Naive thymus-derived CD4-positive, alpha-beta T cell (primary cell): ENCODE measurements at regions of chr1 and their contacts with region 1.

Region 1: GRCh38 chr1:241627453-241628259 is 12.5 kb downstream of the CHML start:
- DNase-seq: peak in 7 of 9 donors; percentile 59 to 81 (median 72)
- ATAC-seq: peak; percentile 90
- H3K4me3 ChIP-seq: peak overlapping the region; percentile 37
- H3K4me3 Mint-ChIP-seq: peak overlapping the region; percentile 55 to 87 (median 84)
- H3K27ac ChIP-seq: peak overlapping the region; percentile 70
- H3K27ac Mint-ChIP-seq: peak overlapping the region; percentile 87 to 96 (median 92)
- H3K4me1 ChIP-seq: peaks cover 0 to 9% of the 10 kb centered on the region in 2 donors
- H3K4me1 Mint-ChIP-seq: peaks cover 6 to 33% (median 25%) of the 10 kb centered on the region in 7 donors
- H3K27me3 ChIP-seq: no peaks in the 10 kb centered on the region
- H3K27me3 Mint-ChIP-seq: no peaks in the 10 kb centered on the region

Region 2: DNA sequence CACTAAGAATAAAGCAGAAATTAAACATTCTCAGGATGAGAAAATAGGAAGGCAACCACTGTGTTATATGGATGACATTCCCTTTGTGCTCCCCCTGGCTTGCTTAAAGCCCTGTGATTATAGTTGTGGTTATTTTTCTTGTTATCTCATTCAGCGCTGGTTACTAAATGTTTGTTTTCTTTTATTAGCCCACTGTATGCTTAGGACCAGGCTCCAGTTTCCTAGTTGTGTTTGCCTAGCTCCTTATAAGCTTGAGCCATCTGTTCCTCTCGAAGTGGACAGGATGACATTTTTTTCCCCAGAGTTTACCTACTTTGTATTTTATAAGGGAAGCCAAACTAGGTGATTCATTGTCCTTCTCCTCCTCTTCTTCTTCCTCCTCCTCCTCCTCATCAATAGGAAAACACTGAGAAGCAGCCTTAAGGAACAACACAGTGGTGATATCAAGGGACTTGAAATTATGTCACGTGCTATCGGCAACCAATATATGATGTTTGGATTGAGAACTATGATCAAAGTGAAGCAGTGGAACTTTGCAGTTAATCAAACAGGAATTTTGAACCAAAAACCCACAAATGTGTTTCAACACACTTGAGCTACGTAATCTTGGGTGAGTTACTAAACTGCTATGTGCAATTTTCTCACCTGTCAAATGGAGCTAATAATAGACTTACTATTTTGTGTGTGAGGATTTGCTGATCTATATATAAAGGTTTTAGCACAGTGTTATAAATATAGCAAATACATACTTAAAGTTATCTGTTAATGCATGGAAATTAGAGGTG is 235.5 kb before region 1 on chr1:
- CTCF ChIA-PET with region 1: no interaction called
- POLR2A ChIA-PET with region 1: no interaction called
- intact Hi-C with region 1: no loop called
- DNase-seq: no peak
- ATAC-seq: no peak
- H3K4me3 ChIP-seq: no peak overlapping the region
- H3K4me3 Mint-ChIP-seq: no peak overlapping the region
- H3K27ac ChIP-seq: no peak overlapping the region
- H3K27ac Mint-ChIP-seq: no peak overlapping the region
- H3K4me1 ChIP-seq: no peaks in the 10 kb centered on the region
- H3K4me1 Mint-ChIP-seq: peaks cover 0 to 1% (median 0%) of the 10 kb centered on the region in 7 donors
- H3K27me3 ChIP-seq: no peaks in the 10 kb centered on the region
- H3K27me3 Mint-ChIP-seq: peaks cover 0 to 20% (median 5%) of the 10 kb centered on the region in 5 donors

Region 3: GRCh38 chr1:241519308-241520079 is 108.2 kb before region 1 on chr1 and contains the start of gene FH:
- CTCF ChIA-PET with region 1: interaction called, 4 read pairs
- POLR2A ChIA-PET with region 1: interaction called, 8 read pairs
- intact Hi-C with region 1: loop called (anchors 1 kb)
- DNase-seq: peak; percentile 83 to 96 (median 94)
- ATAC-seq: peak; percentile 99
- H3K4me3 ChIP-seq: peak within 1 kb of the TSS; percentile 66
- H3K4me3 Mint-ChIP-seq: peak within 1 kb of the TSS in 8 of 10 donors; percentile 85 to 96 (median 92)
- H3K27ac ChIP-seq: peak within 1 kb of the TSS; percentile 82
- H3K27ac Mint-ChIP-seq: peak within 1 kb of the TSS; percentile 56 to 92 (median 82)
- H3K4me1 ChIP-seq: peaks cover 5 to 6% of the 10 kb centered on the region in 2 donors
- H3K4me1 Mint-ChIP-seq: peaks cover 2 to 46% (median 38%) of the 10 kb centered on the region in 7 donors
- H3K27me3 ChIP-seq: no peaks in the 10 kb centered on the region
- H3K27me3 Mint-ChIP-seq: peaks cover 15 to 28% (median 26%) of the 10 kb centered on the region in 5 donors
- total RNA-seq, gene FH: 17.3 to 57.9 (median 21.8) TPM

Region 4: DNA sequence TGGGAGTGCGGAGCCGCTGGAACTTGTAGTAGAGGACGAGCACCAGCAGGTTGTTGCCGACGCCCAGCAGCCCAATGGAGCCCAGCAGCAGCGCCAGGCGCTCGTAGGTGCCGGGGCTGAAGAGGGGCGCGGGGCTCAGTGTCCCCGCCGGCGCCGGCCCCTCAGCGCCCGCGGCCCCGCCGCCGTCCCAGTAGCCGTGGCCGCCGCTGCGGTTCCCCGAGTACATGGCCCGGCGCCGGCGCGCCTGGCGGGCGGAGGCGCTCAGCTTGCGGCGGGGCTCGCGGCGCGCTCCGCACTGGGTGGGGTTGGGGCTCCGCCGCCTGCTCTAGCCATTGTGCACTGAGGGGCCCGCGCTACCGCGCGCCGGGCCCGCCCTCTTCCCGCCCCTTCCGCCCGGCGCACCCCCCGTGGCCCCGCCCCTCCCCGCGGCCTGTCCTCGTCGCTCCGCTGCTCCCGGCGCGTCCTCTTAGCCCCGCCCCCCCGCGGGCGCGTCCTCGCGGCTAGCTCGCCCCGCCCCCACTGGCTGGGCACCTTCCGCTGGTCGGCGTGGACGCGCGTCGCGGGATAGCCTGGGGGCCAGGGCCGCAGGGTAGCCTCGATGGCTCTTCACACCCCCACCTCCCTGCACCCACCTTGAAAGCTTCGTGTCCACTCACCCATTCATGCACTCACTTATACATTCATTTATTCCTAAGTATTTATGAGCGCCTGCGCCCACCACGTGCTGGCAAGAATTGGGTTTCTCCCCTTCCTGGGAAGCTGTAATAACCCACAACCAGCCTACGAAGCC is 12.6 kb after region 1 on chr1 and contains the starts of genes CHML and OPN3:
- CTCF ChIA-PET with region 1: interaction called, 6 read pairs
- POLR2A ChIA-PET with region 1: interaction called, 9 read pairs
- intact Hi-C with region 1: loop called (anchors 1 kb)
- DNase-seq: peak; percentile 79 to 98 (median 85)
- ATAC-seq: peak; percentile 97
- H3K4me3 ChIP-seq: peak within 1 kb of the TSS; percentile 84
- H3K4me3 Mint-ChIP-seq: peak within 1 kb of the TSS; percentile 79 to 92 (median 90)
- H3K27ac ChIP-seq: peak within 1 kb of the TSS; percentile 82
- H3K27ac Mint-ChIP-seq: peak within 1 kb of the TSS; percentile 83 to 97 (median 91)
- H3K4me1 ChIP-seq: peaks cover 0 to 20% of the 10 kb centered on the region in 2 donors
- H3K4me1 Mint-ChIP-seq: peaks cover 25 to 47% (median 45%) of the 10 kb centered on the region in 7 donors
- H3K27me3 ChIP-seq: no peaks in the 10 kb centered on the region
- H3K27me3 Mint-ChIP-seq: no peaks in the 10 kb centered on the region
- total RNA-seq, gene CHML: 11.4 to 18.3 (median 14.0) TPM
- total RNA-seq, gene OPN3: 3.6 to 11.5 (median 10.4) TPM

Region 5: DNA sequence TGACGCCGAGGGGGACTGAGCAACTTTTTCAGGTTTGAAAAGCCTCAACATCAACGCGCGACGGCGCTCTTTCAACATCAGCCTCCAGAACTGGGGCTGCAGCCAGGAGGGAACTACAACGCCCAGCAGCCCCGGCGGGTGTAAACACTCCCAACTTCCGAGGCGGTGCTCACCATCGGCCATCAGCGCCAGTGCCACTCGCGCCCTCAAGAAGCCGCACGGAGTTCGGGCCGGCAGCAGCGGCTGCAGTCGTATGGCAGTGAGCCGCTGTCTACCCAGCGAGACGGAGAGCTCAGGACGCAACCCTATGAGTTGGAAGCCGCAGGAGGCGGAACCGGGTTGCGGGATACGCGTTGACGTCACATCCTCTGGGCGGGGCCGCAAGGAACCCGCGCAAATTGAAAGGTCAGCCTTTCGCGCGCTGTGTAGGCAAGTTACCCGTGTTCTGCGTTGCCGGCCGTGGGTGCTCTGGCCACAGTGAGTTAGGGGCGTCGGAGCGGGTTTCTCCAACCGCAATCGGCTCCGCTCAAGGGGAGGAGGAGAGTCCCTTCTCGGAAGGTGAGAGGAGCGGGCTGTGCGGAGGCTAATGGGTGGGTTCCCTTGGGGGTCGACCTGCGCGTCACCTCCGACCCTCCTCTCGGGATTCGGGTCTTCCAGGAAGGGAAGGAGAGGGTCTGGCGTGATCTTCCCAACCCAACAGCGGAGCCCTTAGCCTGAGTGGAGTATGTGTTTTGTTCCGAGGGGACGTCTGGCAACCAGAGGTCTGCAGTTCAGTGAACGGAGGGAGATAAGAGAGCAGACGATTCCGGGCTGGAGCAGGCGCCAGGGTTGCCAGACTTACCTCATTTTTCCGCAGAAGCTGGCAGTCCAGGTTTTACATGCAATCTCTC is 220.4 kb after region 1 on chr1 and contains the start of gene EXO1:
- CTCF ChIA-PET with region 1: no interaction called
- POLR2A ChIA-PET with region 1: interaction called, 4 read pairs
- intact Hi-C with region 1: loop called in 1 of 2 experiments (anchors 1 kb)
- DNase-seq: peak; percentile 84 to 92 (median 89)
- ATAC-seq: peak; percentile 99
- H3K4me3 ChIP-seq: peak within 1 kb of the TSS; percentile 96
- H3K4me3 Mint-ChIP-seq: peak within 1 kb of the TSS; percentile 87 to 99 (median 96)
- H3K27ac ChIP-seq: peak within 1 kb of the TSS; percentile 96
- H3K27ac Mint-ChIP-seq: peak within 1 kb of the TSS; percentile 95 to 99 (median 99)
- H3K4me1 ChIP-seq: peaks cover 6 to 12% of the 10 kb centered on the region in 2 donors
- H3K4me1 Mint-ChIP-seq: peaks cover 7 to 42% (median 17%) of the 10 kb centered on the region in 7 donors
- H3K27me3 ChIP-seq: no peaks in the 10 kb centered on the region
- H3K27me3 Mint-ChIP-seq: peaks cover 0 to 8% (median 0%) of the 10 kb centered on the region in 5 donors
- total RNA-seq, gene EXO1: 0.11 to 29.8 (median 1.0) TPM

Region 6: DNA sequence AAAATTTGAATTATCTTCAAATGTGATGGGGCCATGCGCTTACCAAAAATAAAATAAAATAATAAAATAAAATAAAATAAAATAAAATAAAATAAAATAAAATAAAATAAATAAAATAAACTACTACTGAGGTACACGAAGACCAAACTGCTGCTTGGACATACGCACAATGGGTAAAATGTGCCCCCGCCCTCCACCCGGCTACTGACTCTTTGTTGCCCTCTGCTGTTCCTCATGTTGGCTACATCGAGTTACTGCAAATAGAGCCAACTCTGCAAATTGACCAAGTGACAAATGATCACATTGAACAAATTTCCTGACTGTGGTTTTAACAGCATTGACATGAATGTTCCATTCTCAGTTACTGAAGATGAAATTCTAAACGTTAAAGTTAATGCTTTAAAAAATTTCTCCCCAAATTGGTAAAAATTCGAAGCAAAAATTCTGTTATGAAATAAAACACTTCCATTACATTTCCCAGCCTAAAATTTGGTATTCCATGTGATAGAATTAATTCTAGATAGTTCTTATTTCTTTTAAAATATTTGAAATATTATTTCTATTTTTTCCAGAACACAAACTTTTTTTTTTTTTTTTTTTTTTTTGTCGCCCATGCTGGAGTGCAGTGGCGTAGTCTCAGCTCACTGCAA is 390.1 kb after region 1 on chr1:
- CTCF ChIA-PET with region 1: no interaction called
- POLR2A ChIA-PET with region 1: no interaction called
- intact Hi-C with region 1: loop called in 1 of 2 experiments (anchors 1 kb)
- DNase-seq: peak in 6 of 9 donors; percentile 6 to 34 (median 14)
- ATAC-seq: peak; percentile 64
- H3K4me3 ChIP-seq: no peak overlapping the region
- H3K4me3 Mint-ChIP-seq: no peak overlapping the region
- H3K27ac ChIP-seq: no peak overlapping the region
- H3K27ac Mint-ChIP-seq: no peak overlapping the region
- H3K4me1 ChIP-seq: no peaks in the 10 kb centered on the region
- H3K4me1 Mint-ChIP-seq: no peaks in the 10 kb centered on the region
- H3K27me3 ChIP-seq: no peaks in the 10 kb centered on the region
- H3K27me3 Mint-ChIP-seq: no peaks in the 10 kb centered on the region